Left ventricle myocardium inferior (tissue), 1 donor: ENCODE measurements at regions of chr5 and their contacts with region 1.

Region 1: DNA sequence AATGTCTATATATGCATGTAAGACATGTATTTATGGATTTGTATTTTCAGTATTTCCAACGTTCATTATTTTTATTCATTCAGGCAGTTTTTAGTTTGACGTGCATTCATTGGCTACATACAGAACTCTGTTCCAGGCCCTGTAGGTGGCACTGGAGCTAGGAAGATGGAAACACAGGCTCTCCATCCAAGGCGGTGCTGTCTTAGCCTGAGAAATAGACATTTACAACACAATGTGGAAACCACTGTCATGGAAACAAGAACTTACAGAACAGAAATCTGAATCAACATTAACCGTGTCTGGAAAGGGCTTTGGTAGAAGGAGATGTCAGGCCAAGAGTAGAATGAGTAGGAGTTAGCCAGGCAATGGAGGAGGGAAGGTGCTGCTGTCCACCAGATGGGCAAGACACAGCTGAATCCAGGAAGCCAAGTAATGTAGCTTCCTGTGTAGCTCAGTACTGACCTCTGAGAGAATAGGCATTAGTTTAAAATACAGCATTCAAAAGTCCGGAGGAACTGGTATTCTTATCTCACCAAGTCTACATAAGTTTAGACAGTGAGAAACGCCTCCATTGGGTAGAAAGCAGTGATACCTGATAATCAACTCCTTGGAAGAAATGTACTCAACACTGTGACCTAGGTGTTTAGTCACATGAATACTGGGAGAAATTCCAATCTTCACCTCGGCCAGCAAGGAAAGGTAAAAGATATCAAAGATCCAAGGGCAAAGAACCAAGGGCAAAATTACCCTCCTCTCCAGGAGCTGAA is 388.6 kb upstream of the CDH6 start:
- DNase-seq: no peak
- H3K4me3 ChIP-seq: no peak overlapping the region
- H3K27ac ChIP-seq: no peak overlapping the region
- H3K4me1 ChIP-seq: no peaks in the 10 kb centered on the region
- H3K27me3 ChIP-seq: no peaks in the 10 kb centered on the region
- CTCF ChIP-seq: peak; percentile 68

Region 2: DNA sequence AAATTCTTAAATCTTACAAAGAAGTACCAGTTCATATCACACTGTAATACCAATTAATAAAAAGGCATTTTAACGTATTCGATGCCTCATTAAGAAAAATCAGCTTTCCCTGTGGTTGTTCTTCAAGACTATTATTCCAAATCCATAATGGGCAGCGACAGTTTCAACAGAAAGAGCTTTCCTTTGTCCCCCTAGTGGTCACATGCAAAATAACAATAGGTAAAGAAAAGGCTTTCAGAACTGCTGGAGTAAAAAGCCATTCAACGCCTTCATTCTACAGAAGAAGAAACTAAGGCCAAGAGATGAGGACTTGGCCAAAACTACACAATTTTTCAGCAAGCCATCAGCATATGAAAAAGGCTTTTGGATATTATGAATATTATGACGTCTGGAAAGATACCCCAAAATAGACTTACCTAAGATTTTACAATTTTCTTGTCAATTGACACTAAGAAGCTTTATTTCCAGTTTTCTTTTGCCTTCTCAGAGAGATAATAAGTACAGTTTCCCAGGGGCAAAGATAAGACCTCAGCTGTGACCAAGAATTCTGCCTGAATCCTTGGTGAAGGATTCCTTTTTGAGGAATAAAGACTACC is 381.8 kb after region 1 on chr5:
- intact Hi-C with region 1: loop called (anchors 5 kb)
- DNase-seq: no peak
- H3K4me3 ChIP-seq: no peak overlapping the region
- H3K27ac ChIP-seq: no peak overlapping the region
- H3K4me1 ChIP-seq: no peaks in the 10 kb centered on the region
- H3K27me3 ChIP-seq: peaks cover 6% of the 10 kb centered on the region
- CTCF ChIP-seq: peak; percentile 79